PC-9 (cell line): ENCODE measurements at regions of chr11 and their contacts with region 1.

Region 1: DNA sequence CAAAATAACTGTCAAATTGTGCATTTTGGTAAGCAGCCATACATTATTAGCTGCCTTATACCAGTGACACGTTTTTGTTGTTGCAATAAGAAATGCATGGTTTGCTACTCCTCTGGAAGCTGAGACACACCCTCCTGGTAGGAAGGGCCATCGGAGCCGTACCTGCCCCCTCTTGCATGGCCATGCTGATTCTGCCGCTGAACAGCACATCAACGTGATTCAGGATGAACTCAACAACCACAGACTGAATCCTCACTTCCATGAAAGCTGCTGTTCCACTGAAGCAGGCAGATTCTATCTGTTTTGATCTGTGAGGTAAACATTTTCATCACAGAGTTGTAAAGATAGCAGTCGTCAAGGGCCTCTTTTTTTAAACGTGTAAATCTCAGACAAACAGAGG is 38.6 kb upstream of the TP53AIP1 start:
- DNase-seq: no peak
- H3K4me3 ChIP-seq: no peak overlapping the region
- H3K27ac ChIP-seq: no peak overlapping the region
- H3K4me1 ChIP-seq: no peaks in the 10 kb centered on the region
- H3K27me3 ChIP-seq: no peaks in the 10 kb centered on the region
- CTCF ChIP-seq: no peak

Region 2: GRCh38 chr11:128379587-128380580 is 601.4 kb before region 1 on chr11:
- CTCF ChIA-PET with region 1: no interaction called
- POLR2A ChIA-PET with region 1: no interaction called
- intact Hi-C with region 1: no loop called
- DNase-seq: peak in 1 of 2 experiments; percentile 37
- H3K4me3 ChIP-seq: no peak overlapping the region
- H3K27ac ChIP-seq: no peak overlapping the region
- H3K4me1 ChIP-seq: peaks cover 7% of the 10 kb centered on the region; the same call in 1 of the 2 replicates
- H3K27me3 ChIP-seq: no peaks in the 10 kb centered on the region
- CTCF ChIP-seq: no peak

Region 3: DNA sequence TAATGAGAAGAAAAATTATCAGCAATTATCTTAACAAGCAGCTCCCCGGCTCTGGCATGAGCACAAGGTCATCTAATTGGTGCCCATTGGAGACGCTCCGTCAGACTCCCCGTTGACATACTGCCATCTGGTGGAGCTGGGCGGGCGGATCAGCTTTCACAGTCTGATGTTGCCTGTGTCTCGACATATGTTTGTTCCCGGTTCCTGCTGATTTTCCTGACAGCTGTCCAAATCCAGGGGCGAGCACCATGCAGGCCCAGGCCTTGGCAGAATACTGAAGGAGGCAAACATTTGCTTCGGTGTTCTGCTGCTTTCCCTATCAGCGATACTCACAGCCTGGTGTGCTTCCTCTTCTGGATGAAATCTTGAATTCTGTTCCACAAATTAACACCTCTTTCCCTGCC is 350.6 kb after region 1 on chr11:
- CTCF ChIA-PET with region 1: no interaction called
- POLR2A ChIA-PET with region 1: no interaction called
- intact Hi-C with region 1: loop called (anchors 10 kb)
- DNase-seq: peak; percentile 71 to 79
- H3K4me3 ChIP-seq: no peak overlapping the region
- H3K27ac ChIP-seq: no peak overlapping the region
- H3K4me1 ChIP-seq: 0 out of 2 replicates have a peak, but pooled peaks cover 3% of the 10 kb centered on the region
- H3K27me3 ChIP-seq: no peaks in the 10 kb centered on the region
- CTCF ChIP-seq: peak; percentile 88